ENCODE measurements at regions of chr13 and their contacts with region 1.

Region 1: GRCh38 chr13:100088644-100089464 is at the start of gene PCCA:
- DNase-seq: peak; percentile 43 to 86 (median 51)
- ATAC-seq: peak; percentile 87
- H3K4me3 ChIP-seq: peak within 1 kb of the TSS; percentile 77
- H3K4me3 Mint-ChIP-seq: peak within 1 kb of the TSS; percentile 90 to 99 (median 95)
- H3K27ac ChIP-seq: peak within 1 kb of the TSS; percentile 58
- H3K27ac Mint-ChIP-seq: peak within 1 kb of the TSS; percentile 44 to 96 (median 79)
- H3K4me1 ChIP-seq: peaks cover 0 to 19% of the 10 kb centered on the region in 2 donors
- H3K4me1 Mint-ChIP-seq: peaks cover 22 to 41% (median 27%) of the 10 kb centered on the region in 7 donors
- H3K27me3 ChIP-seq: no peaks in the 10 kb centered on the region
- H3K27me3 Mint-ChIP-seq: peaks cover 0 to 5% (median 0%) of the 10 kb centered on the region in 5 donors
- total RNA-seq, gene PCCA: 8.3 to 14.6 (median 12.0) TPM

Region 2: GRCh38 chr13:99969919-99970621 is 118.8 kb before region 1 on chr13:
- CTCF ChIA-PET with region 1: no interaction called
- POLR2A ChIA-PET with region 1: no interaction called
- intact Hi-C with region 1: loop called in 1 of 2 experiments (anchors 5 kb)
- DNase-seq: peak in 1 of 9 donors; percentile 49
- ATAC-seq: peak; percentile 48
- H3K4me3 ChIP-seq: no peak overlapping the region
- H3K4me3 Mint-ChIP-seq: peak overlapping the region; percentile 82 to 95 (median 86)
- H3K27ac ChIP-seq: no peak overlapping the region
- H3K27ac Mint-ChIP-seq: peak overlapping the region in 8 of 9 donors; percentile 53 to 91 (median 86)
- H3K4me1 ChIP-seq: peaks cover 0 to 10% of the 10 kb centered on the region in 2 donors
- H3K4me1 Mint-ChIP-seq: peaks cover 18 to 34% (median 25%) of the 10 kb centered on the region in 7 donors
- H3K27me3 ChIP-seq: peaks cover 47 to 74% of the 10 kb centered on the region in 2 donors
- H3K27me3 Mint-ChIP-seq: peaks cover 68 to 79% (median 70%) of the 10 kb centered on the region in 5 donors

Region 3: DNA sequence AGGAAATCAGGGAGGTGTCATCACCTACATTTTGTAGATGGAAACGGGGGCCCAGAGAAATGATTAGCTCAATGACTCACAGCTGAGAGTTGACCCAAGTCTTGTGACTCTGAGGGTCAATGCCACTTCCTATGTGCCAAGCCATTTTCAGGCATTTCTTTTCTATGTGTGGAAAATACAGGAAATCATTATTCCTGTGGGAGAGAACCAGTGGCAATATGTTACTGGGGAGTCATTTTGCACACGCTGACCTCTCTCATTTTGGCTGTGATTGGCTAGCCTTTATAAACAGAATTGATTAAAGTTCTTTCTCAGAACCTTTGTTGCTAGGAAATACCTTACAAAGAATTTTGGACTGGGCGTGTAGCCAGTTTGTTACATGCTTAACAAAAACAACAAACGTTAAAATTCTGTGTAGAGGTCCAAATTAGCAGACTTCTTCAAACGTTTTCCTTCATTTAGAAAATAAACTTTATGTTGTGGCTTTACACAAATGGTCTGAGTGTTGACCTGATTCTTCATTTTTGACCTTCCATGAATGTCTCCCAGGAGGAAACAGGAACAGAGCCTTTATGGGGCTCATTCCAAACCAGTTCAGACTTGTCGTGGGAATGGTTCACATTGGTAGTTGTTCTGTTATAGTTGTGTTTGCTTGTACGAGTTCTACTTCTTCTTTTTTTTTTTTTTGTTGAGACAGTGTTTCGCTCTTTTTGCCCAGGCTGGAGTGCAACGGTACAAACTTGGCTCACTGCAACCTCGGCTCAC is 11.4 kb after region 1 on chr13:
- CTCF ChIA-PET with region 1: no interaction called
- POLR2A ChIA-PET with region 1: no interaction called
- intact Hi-C with region 1: loop called in 1 of 2 experiments (anchors 2 kb)
- DNase-seq: no peak
- ATAC-seq: no peak
- H3K4me3 ChIP-seq: no peak overlapping the region
- H3K4me3 Mint-ChIP-seq: no peak overlapping the region
- H3K27ac ChIP-seq: no peak overlapping the region
- H3K27ac Mint-ChIP-seq: no peak overlapping the region
- H3K4me1 ChIP-seq: no peaks in the 10 kb centered on the region
- H3K4me1 Mint-ChIP-seq: peaks cover 0 to 25% (median 12%) of the 10 kb centered on the region in 7 donors
- H3K27me3 ChIP-seq: no peaks in the 10 kb centered on the region
- H3K27me3 Mint-ChIP-seq: no peaks in the 10 kb centered on the region

Region 4: DNA sequence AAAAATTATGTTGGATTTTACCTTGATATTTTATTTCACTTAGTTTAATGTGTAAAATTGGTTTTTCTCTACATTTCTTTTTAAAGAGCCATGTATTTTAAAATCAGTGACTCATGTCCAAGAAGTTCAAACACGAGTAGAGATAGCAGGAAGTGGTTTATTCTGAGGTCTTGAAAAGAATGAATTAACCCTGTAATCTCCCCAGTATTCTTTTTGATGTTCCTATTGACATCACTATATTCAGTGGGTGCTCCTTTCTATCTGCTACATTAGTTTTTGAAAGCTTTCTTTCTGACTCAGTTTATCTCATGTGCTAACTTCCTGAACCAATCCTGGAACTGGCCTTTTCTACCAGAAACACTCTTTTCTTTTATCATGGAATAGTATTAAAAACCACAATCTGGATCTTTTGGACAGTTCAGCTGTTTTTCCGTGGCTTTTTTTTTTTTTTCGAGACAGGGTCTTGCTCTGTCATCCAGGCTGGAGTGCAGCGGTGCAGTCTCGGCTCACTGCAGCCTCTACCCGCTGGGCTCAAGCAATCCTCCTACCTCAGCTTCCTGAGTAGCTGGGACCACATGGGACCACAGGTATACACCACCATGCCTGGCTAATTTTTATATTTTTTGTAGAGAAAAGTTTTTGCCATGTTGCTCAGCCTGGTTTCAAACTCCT is 115.0 kb after region 1 on chr13:
- CTCF ChIA-PET with region 1: no interaction called
- POLR2A ChIA-PET with region 1: no interaction called
- intact Hi-C with region 1: loop called (anchors 5 kb)
- DNase-seq: peak in 6 of 9 donors; percentile 13 to 57 (median 42)
- ATAC-seq: peak; percentile 78
- H3K4me3 ChIP-seq: peak overlapping the region; percentile 47
- H3K4me3 Mint-ChIP-seq: peak overlapping the region; percentile 25 to 78 (median 68)
- H3K27ac ChIP-seq: no peak overlapping the region
- H3K27ac Mint-ChIP-seq: peak overlapping the region in 2 of 9 donors; percentile 51 to 70
- H3K4me1 ChIP-seq: peaks cover 10 to 14% of the 10 kb centered on the region in 2 donors
- H3K4me1 Mint-ChIP-seq: peaks cover 14 to 25% (median 21%) of the 10 kb centered on the region in 7 donors
- H3K27me3 ChIP-seq: no peaks in the 10 kb centered on the region
- H3K27me3 Mint-ChIP-seq: no peaks in the 10 kb centered on the region

Region 5: GRCh38 chr13:100315522-100315921 is 226.7 kb after region 1 on chr13:
- CTCF ChIA-PET with region 1: no interaction called
- POLR2A ChIA-PET with region 1: no interaction called
- intact Hi-C with region 1: no loop called
- DNase-seq: no peak
- ATAC-seq: no peak
- H3K4me3 ChIP-seq: no peak overlapping the region
- H3K4me3 Mint-ChIP-seq: no peak overlapping the region
- H3K27ac ChIP-seq: no peak overlapping the region
- H3K27ac Mint-ChIP-seq: no peak overlapping the region
- H3K4me1 ChIP-seq: no peaks in the 10 kb centered on the region
- H3K4me1 Mint-ChIP-seq: no peaks in the 10 kb centered on the region
- H3K27me3 ChIP-seq: no peaks in the 10 kb centered on the region
- H3K27me3 Mint-ChIP-seq: no peaks in the 10 kb centered on the region

Measured in naive thymus-derived CD4-positive, alpha-beta T cell (primary cell).